ENCODE measurements at regions of chr11 and their contacts with region 1.

Region 1: GRCh38 chr11:75280227-75280701 is 39.7 kb downstream of the TPBGL start:
- DNase-seq: peak; percentile 79 to 93
- ATAC-seq: peak; percentile 85 to 97
- H3K4me3 ChIP-seq: no peak overlapping the region
- H3K27ac ChIP-seq: peak overlapping the region in 1 of 2 experiments; percentile 28; a peak in 1 of 6 replicates
- H3K4me1 ChIP-seq: peaks cover 10% of the 10 kb centered on the region
- CTCF ChIP-seq: peak; percentile 90
- EP300 ChIP-seq: no peak
- POLR2A ChIP-seq: no peak
- RAD21 ChIP-seq: peak; percentile 96 to 99

Region 2: DNA sequence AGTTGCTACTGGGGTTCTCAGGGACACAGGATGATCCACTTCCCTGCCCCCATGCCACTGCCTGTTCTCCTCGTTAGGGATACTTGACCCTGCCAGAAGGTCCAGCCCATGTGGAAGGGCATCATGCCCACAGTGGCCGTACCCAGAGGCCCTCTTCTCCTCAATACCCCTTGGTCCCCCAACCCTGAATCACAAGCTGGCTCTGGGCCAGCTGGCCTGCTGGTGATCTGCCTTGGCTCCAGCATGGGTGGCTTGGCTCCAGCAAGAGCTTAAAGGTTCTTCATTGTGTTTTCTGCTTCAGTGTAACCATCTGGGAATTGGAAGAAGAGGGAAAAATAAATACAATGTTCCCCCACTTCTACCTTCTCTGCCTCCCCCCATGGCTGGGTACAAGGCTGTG is 50.8 kb before region 1 on chr11:
- CTCF ChIA-PET with region 1: no interaction called
- POLR2A ChIA-PET with region 1: no interaction called
- DNase-seq: no peak
- ATAC-seq: no peak
- H3K4me3 ChIP-seq: no peak overlapping the region
- H3K27ac ChIP-seq: no peak overlapping the region
- H3K4me1 ChIP-seq: no peaks in the 10 kb centered on the region
- CTCF ChIP-seq: no peak
- EP300 ChIP-seq: no peak
- POLR2A ChIP-seq: no peak
- RAD21 ChIP-seq: no peak

Region 3: DNA sequence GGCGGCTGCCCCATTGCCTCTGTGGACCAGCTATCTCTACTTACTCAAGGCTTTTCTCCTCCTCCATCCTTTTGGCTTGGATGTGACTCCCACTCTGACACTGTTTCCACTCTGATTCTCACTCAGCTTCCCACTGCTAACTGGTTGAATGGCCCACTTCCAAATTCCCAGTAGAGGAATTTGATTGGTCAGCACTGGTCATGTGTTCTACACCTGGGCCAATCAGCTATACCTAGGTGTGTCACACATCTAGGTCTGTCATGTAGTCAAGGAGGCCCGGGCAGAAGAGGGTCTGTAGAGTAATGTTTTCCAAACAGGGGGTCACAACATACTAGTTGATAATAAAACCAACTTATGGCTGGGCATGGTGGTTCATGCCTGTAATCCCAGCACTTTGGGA is 13.6 kb after region 1 on chr11:
- CTCF ChIA-PET with region 1: interaction called, 81 read pairs
- POLR2A ChIA-PET with region 1: no interaction called
- DNase-seq: no peak
- ATAC-seq: peak in 1 of 2 experiments; percentile 22; a peak in 1 of 6 replicates
- H3K4me3 ChIP-seq: no peak overlapping the region
- H3K27ac ChIP-seq: no peak overlapping the region
- H3K4me1 ChIP-seq: peaks cover 6% of the 10 kb centered on the region; the same call in 2 of the 3 replicates
- CTCF ChIP-seq: no peak
- EP300 ChIP-seq: no peak
- POLR2A ChIP-seq: no peak
- RAD21 ChIP-seq: no peak

Region 4: GRCh38 chr11:75319035-75319877 is 39.0 kb after region 1 on chr11:
- CTCF ChIA-PET with region 1: interaction called, 79 read pairs
- POLR2A ChIA-PET with region 1: no interaction called
- DNase-seq: no peak
- ATAC-seq: peak; percentile 31 to 47; a peak in 4 of 6 replicates
- H3K4me3 ChIP-seq: no peak overlapping the region
- H3K27ac ChIP-seq: peak overlapping the region in 1 of 2 experiments; percentile 25; a peak in 1 of 6 replicates
- H3K4me1 ChIP-seq: peaks cover 29% of the 10 kb centered on the region
- CTCF ChIP-seq: no peak
- EP300 ChIP-seq: no peak
- POLR2A ChIP-seq: no peak
- RAD21 ChIP-seq: no peak

Region 5: DNA sequence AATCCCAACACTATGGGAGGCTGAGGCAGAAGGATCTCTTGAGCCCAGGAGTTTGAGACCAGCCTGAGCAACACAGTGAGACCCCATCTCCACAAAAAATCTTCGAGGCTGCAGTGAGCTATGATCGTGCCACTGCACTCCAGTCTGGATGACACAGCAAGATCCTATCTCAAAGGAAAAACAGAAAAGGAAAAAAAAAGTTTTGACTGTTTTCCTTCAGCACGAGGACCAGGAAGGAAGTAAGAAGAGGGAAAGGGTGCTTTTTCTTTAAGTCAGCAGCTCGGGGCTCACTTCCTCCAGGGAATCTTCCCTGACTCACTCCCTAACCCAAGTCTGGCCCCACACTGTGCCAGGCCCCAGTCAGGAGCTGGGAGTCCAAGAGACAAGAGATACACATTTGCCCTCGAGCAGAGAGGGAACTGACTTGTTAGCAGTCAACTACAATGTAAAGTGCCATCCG is 57.0 kb after region 1 on chr11:
- CTCF ChIA-PET with region 1: interaction called, 79 read pairs
- POLR2A ChIA-PET with region 1: interaction called, 4 read pairs
- DNase-seq: peak in 1 of 2 experiments; percentile 50
- ATAC-seq: peak in 1 of 2 experiments; percentile 8; a peak in 1 of 6 replicates
- H3K4me3 ChIP-seq: no peak overlapping the region
- H3K27ac ChIP-seq: peak overlapping the region; percentile 76
- H3K4me1 ChIP-seq: peaks cover 55% of the 10 kb centered on the region
- CTCF ChIP-seq: no peak
- EP300 ChIP-seq: no peak
- POLR2A ChIP-seq: no peak
- RAD21 ChIP-seq: no peak

Measured in A549 (cell line).